Left lung (tissue), 14 donors: ENCODE measurements at regions of chr11 and their contacts with region 1.

Region 1: DNA sequence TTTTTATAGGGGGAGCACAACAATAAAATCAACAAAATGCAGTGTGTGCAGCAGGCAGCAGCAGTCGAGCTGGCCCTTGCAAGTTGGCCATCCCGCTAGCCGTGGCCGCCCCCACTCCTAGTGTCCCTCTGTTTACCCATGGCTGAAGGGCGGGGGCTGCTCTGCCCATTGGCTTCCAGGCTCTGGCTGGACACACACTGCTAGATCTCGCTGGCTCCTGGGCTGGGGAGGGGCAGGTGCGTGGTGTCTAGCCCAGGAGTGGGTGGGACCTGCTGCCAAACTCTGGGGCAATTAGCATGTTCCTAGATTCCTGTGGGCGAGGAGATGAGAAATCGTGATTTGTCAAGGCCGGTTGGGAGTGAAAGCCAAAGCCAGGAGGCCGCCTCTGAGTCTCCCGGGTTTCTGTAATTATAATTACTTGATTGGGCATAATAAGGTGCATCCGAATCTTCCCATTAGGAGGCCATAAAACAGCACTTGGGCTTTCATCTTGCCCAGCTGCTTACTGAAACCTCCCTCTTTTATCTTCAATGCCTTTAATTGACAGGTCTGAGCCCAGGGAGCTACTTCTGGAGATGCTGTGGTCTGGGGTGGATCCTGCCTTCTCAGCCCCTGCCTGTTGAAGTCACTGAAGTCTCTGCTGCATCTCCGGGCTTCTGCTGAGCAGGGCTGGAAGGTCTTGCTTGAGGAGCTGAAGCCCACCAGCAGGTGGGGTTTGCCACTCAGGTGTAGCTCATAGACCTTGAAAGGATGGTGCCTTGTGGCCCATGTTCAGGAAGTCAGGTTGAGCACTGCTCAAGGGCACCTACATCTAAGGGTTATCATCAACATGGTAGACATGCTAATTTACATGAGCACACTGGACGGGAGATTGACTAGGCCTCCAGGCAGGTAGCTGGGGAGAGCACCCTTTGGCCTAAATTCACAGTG is 44.5 kb upstream of the DKK3 start:
- DNase-seq: no peak
- ATAC-seq: no peak
- H3K4me3 ChIP-seq: no peak overlapping the region
- H3K27ac ChIP-seq: no peak overlapping the region
- H3K4me1 ChIP-seq: no peaks in the 10 kb centered on the region
- H3K27me3 ChIP-seq: no peaks in the 10 kb centered on the region
- CTCF ChIP-seq: no peak

Region 2: DNA sequence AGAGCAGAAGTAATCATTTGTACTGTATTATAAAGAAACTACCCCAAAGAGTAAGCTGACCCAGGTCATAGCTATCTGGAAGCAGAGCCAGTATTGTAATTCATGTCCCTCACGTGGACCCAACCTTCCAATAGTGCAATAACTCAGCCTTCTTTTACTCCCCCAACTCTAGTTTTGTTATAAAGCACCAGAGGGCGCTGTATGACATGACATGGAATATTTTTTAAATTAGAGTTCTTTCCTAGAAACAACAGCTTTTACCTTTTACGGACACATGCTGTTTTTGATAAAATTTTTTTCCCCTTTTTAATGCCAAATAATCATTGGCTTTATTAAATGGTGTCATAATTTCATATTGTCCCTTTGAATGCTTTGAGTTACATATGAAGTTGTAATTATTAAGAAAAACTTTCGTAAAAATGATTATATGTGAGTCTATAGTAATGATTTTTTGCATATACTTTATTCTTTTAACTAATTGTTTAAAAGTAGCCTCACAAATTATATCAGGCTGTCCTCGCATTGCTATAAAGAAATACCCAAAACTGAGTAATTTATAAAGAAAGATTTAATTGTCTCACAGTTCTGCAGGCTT is 121.4 kb before region 1 on chr11:
- intact Hi-C with region 1: no loop called
- DNase-seq: peak in 2 of 4 donors; percentile 51 to 70
- ATAC-seq: peak; percentile 82
- H3K4me3 ChIP-seq: no peak overlapping the region
- H3K27ac ChIP-seq: no peak overlapping the region
- H3K4me1 ChIP-seq: no peaks in the 10 kb centered on the region
- H3K27me3 ChIP-seq: no peaks in the 10 kb centered on the region
- CTCF ChIP-seq: peak; percentile 51 to 55

Region 3: DNA sequence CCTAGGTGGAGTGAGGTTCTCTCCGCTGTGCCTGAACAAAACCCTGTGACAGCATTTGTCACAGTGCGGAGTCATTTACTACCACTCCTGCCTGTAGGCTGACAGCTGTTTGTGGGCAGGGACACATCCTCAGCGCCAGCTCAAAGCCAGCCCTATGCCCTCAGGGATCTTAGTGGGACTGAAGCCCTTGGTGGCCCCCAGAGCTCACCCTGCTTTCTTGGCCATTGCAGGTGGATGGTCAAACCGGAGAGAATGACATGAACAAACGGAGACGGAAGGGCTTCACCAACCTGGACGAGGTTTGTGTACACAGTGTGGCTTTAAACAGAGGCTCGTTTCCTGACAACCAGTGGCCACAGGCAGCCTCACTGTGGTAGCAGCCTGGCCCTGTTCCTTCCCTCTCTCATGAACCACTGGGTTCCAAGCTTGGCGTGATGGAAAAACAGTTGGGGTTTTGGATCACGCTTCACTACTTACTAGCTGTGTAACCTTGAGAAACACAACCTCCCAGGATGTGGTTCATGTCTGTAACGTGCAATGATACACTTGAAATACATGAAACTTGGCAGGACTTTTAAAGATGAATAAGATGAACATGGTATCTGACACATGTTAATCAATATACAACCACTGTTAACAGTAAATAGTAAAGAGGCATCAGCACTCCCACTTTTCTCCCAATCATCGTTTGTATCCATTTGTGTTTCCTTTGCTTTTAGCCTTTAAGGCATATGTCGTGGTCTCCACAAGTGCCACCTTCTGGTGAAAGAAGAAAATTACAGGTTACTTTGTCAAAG is 183.2 kb after region 1 on chr11:
- intact Hi-C with region 1: loop called in 1 of 2 experiments (anchors 10 kb)
- DNase-seq: peak in 2 of 4 donors; percentile 58 to 67
- ATAC-seq: peak; percentile 60
- H3K4me3 ChIP-seq: no peak overlapping the region
- H3K27ac ChIP-seq: peak overlapping the region; percentile 43 to 51
- H3K4me1 ChIP-seq: peaks cover 9 to 26% of the 10 kb centered on the region in 2 donors
- H3K27me3 ChIP-seq: no peaks in the 10 kb centered on the region
- CTCF ChIP-seq: peak; percentile 74

Region 4: DNA sequence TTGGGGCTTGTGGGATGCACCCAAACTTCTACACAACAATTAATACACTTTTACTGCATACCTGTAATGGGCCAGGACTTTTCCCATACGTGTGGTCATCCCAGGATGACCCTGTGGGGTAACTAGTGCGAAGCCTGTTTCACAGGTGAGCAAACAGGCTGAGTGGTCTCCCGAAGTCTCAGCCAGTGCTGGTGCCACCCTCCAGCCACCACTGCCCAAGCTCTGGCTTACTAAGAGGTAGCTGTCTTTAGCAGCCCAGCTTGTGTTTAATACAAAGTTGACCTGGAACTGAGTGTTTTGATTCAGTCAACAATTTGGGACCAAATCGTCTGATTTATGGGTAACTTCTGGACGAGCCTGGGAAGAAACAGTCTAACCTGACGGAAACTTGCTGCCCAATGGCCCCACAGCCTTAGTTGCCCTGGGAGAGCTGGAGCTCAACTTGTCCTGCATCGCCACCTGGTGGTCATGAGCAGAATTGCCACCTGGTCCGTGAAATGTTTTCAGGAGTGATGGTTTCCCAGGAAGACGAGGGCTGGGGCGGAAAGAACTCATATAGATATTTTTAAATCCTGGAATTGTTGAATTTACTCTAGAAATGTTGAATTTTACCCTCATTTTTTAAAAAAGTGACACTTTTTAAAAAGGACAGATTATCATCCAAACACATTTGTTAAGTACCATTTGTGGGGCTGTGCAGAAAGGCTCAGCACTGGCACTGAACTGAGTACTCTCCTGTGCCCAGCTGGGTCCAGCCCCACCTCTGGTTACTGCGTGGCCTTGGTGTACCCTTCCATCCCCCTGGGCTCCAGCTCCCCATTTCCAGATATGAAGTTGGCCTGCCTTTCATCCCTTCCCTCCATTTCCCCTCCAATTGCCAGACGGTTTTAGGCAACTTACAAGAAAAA is 228.9 kb after region 1 on chr11:
- intact Hi-C with region 1: loop called in 1 of 2 experiments (anchors 5 kb)
- DNase-seq: peak; percentile 75 to 88 (median 82)
- ATAC-seq: peak; percentile 81
- H3K4me3 ChIP-seq: no peak overlapping the region
- H3K27ac ChIP-seq: no peak overlapping the region
- H3K4me1 ChIP-seq: peaks cover 11 to 22% of the 10 kb centered on the region in 2 donors
- H3K27me3 ChIP-seq: no peaks in the 10 kb centered on the region
- CTCF ChIP-seq: peak; percentile 88 to 97